ENCODE measurements at regions of chr6 and their contacts with region 1.

Region 1: GRCh38 chr6:11810039-11810541 is 31.5 kb upstream of the ADTRP start:
- DNase-seq: peak; percentile 90
- H3K4me3 ChIP-seq: no peak overlapping the region
- H3K27ac ChIP-seq: peak overlapping the region; percentile 46
- H3K4me1 ChIP-seq: peaks cover 56% of the 10 kb centered on the region
- H3K27me3 ChIP-seq: no peaks in the 10 kb centered on the region
- CTCF ChIP-seq: no peak

Region 2: DNA sequence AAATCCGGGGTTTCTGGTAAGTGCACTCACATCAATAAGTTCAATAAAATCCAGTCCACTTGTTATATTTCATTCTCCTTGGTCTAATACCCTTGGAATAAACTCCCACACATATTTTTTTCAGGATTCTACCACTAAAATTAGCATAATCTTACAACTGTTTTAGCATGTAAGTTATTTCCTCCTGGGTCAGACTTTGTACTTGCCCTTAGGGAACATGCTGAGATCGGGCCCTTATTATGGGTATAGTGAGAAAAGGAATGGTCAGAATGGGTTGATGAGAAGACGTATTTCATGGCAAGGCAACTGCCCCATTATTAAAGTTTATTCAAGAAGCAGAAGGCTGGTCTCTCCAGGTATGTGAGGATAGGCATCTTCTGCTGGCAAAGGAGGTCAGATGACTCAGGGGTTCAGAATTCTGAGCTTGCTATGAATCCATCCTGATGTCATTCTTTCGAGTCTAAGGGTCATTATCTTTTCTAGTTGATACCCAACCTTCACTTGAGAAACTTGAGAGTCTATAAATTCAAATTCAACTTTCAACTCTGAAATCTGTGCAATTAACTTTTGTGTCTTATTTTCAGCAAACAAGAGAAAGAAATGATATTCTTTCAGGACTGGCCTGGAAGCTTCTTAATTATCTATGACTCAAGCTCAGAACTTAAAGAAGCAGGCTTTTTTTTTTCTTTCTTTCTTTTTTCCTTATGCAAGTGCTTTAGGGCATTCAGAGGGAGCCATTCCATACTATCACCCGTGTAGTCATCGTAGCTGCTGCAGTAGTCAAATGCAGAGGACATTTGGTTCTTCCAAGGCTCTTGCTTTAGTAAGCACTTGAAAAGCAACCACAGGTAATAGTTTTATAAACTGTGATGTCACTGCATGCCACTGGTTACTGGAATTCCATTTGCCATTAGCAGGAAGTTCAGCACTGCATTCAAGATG is 124.7 kb before region 1 on chr6:
- CTCF ChIA-PET with region 1: no interaction called
- dilution Hi-C with region 1: no loop called
- in situ Hi-C with region 1: no loop called
- intact Hi-C with region 1: loop called (anchors 5 kb)
- DNase-seq: peak; percentile 89
- H3K4me3 ChIP-seq: peak overlapping the region in 2 of 3 experiments; percentile 4
- H3K27ac ChIP-seq: peak overlapping the region; percentile 65
- H3K4me1 ChIP-seq: peaks cover 20% of the 10 kb centered on the region
- H3K27me3 ChIP-seq: no peaks in the 10 kb centered on the region
- CTCF ChIP-seq: no peak

Region 3: DNA sequence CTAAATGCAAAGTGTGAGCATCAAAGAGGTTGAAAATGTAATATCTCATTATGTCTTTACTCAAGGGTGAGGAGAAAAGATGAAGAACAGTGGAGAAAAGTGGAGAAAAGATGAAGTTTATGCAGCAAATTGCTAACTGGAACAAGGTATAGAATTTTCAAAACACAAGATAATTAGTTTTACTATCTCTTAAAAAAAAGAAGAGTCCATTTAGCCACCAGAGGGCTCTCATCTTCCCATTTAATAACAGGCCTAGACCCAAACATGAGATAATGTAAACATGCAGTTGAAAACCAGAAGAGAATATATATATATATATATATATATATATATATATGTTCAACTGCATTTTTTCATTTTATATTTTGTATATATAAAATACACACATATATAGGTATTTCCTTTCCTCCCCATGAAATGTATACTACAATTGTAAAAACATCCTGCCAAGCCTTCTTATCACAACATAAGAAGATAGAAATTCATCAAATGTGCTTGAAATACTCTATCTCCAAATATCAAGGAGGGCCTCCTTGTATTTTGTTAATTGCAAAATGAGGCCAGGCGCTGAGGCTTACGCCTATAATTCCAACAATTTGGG is 109.9 kb before region 1 on chr6:
- CTCF ChIA-PET with region 1: no interaction called
- dilution Hi-C with region 1: no loop called
- in situ Hi-C with region 1: no loop called
- intact Hi-C with region 1: loop called (anchors 1 kb)
- DNase-seq: peak; percentile 29
- H3K4me3 ChIP-seq: no peak overlapping the region
- H3K27ac ChIP-seq: no peak overlapping the region
- H3K4me1 ChIP-seq: peaks cover 14% of the 10 kb centered on the region
- H3K27me3 ChIP-seq: no peaks in the 10 kb centered on the region
- CTCF ChIP-seq: peak; percentile 23 to 58

Region 4: DNA sequence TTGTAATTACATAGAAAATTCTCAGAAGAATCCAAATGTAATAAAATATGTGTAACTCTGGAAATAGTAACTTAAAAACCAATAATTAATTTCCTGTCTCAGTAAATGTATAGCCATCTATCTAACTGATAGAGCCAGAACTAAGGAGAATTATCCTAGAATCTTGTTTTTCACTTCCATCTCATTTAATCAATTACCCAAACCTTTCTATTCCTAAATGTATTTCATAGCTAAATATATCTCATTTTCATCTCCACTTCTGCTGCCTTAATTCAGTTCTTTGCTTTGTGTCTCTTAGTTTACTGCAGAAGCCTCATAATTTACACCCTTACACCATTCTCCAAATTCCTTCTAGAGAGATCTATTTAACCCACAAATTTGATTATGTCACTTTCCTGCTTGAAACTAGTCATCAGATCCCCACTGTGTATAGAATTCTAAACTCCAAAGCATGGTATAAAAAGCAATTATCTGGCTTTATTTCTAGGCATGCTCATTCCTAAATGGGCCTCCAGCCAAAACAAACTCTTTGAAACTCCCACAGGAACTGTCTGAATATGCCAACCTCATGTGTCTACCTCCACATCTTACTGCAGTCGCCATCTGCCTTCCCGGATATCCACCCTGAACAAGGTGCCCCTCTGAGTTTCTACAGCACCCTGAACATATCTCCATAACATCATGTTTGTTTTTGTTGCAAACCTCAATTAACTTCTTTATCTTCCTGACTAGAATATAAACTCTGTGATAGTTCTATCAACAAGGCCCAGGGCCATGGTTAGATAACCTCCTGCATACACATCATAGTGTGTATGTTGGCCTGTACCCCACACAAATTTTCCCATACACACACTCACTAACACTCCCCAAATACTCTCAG is 39.0 kb after region 1 on chr6:
- CTCF ChIA-PET with region 1: no interaction called
- dilution Hi-C with region 1: loop called (anchors 5 kb)
- in situ Hi-C with region 1: no loop called
- intact Hi-C with region 1: no loop called
- DNase-seq: peak; percentile 35
- H3K4me3 ChIP-seq: no peak overlapping the region
- H3K27ac ChIP-seq: no peak overlapping the region
- H3K4me1 ChIP-seq: peaks cover 25% of the 10 kb centered on the region
- H3K27me3 ChIP-seq: no peaks in the 10 kb centered on the region
- CTCF ChIP-seq: no peak

Region 5: GRCh38 chr6:11921017-11921438 is 110.9 kb after region 1 on chr6:
- CTCF ChIA-PET with region 1: no interaction called
- dilution Hi-C with region 1: no loop called
- in situ Hi-C with region 1: no loop called
- intact Hi-C with region 1: loop called (anchors 5 kb)
- DNase-seq: peak; percentile 90
- H3K4me3 ChIP-seq: no peak overlapping the region
- H3K27ac ChIP-seq: peak overlapping the region; percentile 37
- H3K4me1 ChIP-seq: peaks cover 13% of the 10 kb centered on the region
- H3K27me3 ChIP-seq: no peaks in the 10 kb centered on the region
- CTCF ChIP-seq: no peak

Region 6: GRCh38 chr6:12024699-12025434 is 214.8 kb after region 1 on chr6:
- CTCF ChIA-PET with region 1: interaction called, 3 read pairs
- dilution Hi-C with region 1: no loop called
- in situ Hi-C with region 1: no loop called
- intact Hi-C with region 1: loop called (anchors 5 kb)
- DNase-seq: peak; percentile 49
- H3K4me3 ChIP-seq: no peak overlapping the region
- H3K27ac ChIP-seq: no peak overlapping the region
- H3K4me1 ChIP-seq: peaks cover 14% of the 10 kb centered on the region
- H3K27me3 ChIP-seq: no peaks in the 10 kb centered on the region
- CTCF ChIP-seq: no peak